Activated naive CD8-positive, alpha-beta T cell treated with anti-CD3 and anti-CD28 coated beads, Interleukin-2, amount 10 ng/mL, durations not matched to agents 7 days and 5 days (primary cell): ENCODE measurements at regions of chr12 and their contacts with region 1.

Region 1: GRCh38 chr12:49130151-49131050 is 794 bp downstream of the TUBA1B start:
- DNase-seq: peak; percentile 95
- ATAC-seq: peak; percentile 53
- H3K4me3 Mint-ChIP-seq: peak overlapping the region; percentile 95
- H3K27ac Mint-ChIP-seq: peak overlapping the region; percentile 98
- H3K4me1 Mint-ChIP-seq: peaks cover 51% of the 10 kb centered on the region
- H3K27me3 Mint-ChIP-seq: no peaks in the 10 kb centered on the region

Region 2: GRCh38 chr12:49069507-49070346 is 60.7 kb before region 1 on chr12 and contains the start of gene RHEBL1:
- POLR2A ChIA-PET with region 1: interaction called, 43 read pairs
- DNase-seq: peak; percentile 99
- ATAC-seq: peak; percentile 100
- H3K4me3 Mint-ChIP-seq: peak within 1 kb of the TSS; percentile 92
- H3K27ac Mint-ChIP-seq: peak within 1 kb of the TSS; percentile 79
- H3K4me1 Mint-ChIP-seq: peaks cover 20% of the 10 kb centered on the region
- H3K27me3 Mint-ChIP-seq: no peaks in the 10 kb centered on the region
- total RNA-seq, gene RHEBL1: 8.0 to 9.7 TPM

Region 3: GRCh38 chr12:49105608-49106007 is 24.8 kb before region 1 on chr12:
- POLR2A ChIA-PET with region 1: interaction called, 55 read pairs
- DNase-seq: no peak
- ATAC-seq: no peak
- H3K4me3 Mint-ChIP-seq: no peak overlapping the region
- H3K27ac Mint-ChIP-seq: no peak overlapping the region
- H3K4me1 Mint-ChIP-seq: peaks cover 26% of the 10 kb centered on the region
- H3K27me3 Mint-ChIP-seq: no peaks in the 10 kb centered on the region

Region 4: DNA sequence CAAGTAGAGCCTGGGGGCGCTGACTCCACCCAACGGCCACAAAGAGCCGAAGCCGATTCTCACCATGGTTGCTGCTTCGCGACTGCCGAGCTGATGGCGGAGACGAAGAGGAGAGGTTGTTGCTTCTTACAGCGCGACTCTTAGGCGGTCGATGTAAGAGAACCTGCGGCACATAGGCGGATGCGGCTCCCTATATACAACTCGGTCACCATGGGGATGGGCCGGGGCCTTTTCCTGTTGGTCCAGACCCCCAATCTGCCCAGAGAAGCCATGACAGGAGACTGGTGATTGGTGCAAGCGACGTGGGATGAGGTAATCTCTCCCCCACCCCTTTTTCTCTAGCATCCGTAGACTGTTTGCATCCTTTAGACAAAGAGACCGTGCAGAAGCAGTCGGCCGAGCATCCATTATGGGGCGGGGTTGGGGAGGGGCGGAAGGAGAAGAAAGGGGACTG is 58.5 kb after region 1 on chr12 and contains the start of gene TUBA1A:
- POLR2A ChIA-PET with region 1: interaction called, 176 read pairs
- DNase-seq: peak; percentile 87
- ATAC-seq: peak; percentile 90
- H3K4me3 Mint-ChIP-seq: peak within 1 kb of the TSS; percentile 95
- H3K27ac Mint-ChIP-seq: peak within 1 kb of the TSS; percentile 98
- H3K4me1 Mint-ChIP-seq: peaks cover 16% of the 10 kb centered on the region
- H3K27me3 Mint-ChIP-seq: peaks cover 3% of the 10 kb centered on the region
- total RNA-seq, gene TUBA1A: 99.5 to 101 TPM

Region 5: GRCh38 chr12:49264738-49265515 is 134.5 kb after region 1 on chr12 and contains the start of gene TUBA1C:
- POLR2A ChIA-PET with region 1: interaction called, 91 read pairs
- DNase-seq: peak; percentile 97
- ATAC-seq: peak; percentile 85
- H3K4me3 Mint-ChIP-seq: peak within 1 kb of the TSS; percentile 99
- H3K27ac Mint-ChIP-seq: peak within 1 kb of the TSS; percentile 98
- H3K4me1 Mint-ChIP-seq: peaks cover 30% of the 10 kb centered on the region
- H3K27me3 Mint-ChIP-seq: no peaks in the 10 kb centered on the region
- total RNA-seq, gene TUBA1C: 162 to 168 TPM